ENCODE measurements at regions of chr4 and their contacts with region 1.

Region 1: GRCh38 chr4:113468165-113469022 is 293.1 kb downstream of the CAMK2D start:
- DNase-seq: peak; percentile 93
- ATAC-seq: peak; percentile 96
- H3K4me3 ChIP-seq: peak overlapping the region; percentile 46; the same call in 1 of the 2 replicates
- H3K27ac ChIP-seq: peak overlapping the region; percentile 87
- H3K4me1 ChIP-seq: peaks cover 26% of the 10 kb centered on the region
- H3K27me3 ChIP-seq: no peaks in the 10 kb centered on the region
- CTCF ChIP-seq: no peak

Region 2: GRCh38 chr4:113292371-113293042 is 175.9 kb before region 1 on chr4:
- CTCF ChIA-PET with region 1: no interaction called
- POLR2A ChIA-PET with region 1: no interaction called
- intact Hi-C with region 1: loop called (anchors 5 kb)
- DNase-seq: no peak
- ATAC-seq: no peak
- H3K4me3 ChIP-seq: no peak overlapping the region
- H3K27ac ChIP-seq: no peak overlapping the region
- H3K4me1 ChIP-seq: no peaks in the 10 kb centered on the region
- H3K27me3 ChIP-seq: no peaks in the 10 kb centered on the region
- CTCF ChIP-seq: no peak

Region 3: GRCh38 chr4:113445286-113445685 is 23.1 kb before region 1 on chr4:
- CTCF ChIA-PET with region 1: no interaction called
- POLR2A ChIA-PET with region 1: interaction called, 5 read pairs
- intact Hi-C with region 1: loop called (anchors 1 kb)
- DNase-seq: peak; percentile 82
- ATAC-seq: peak; percentile 49
- H3K4me3 ChIP-seq: peak overlapping the region; percentile 40; the same call in 1 of the 2 replicates
- H3K27ac ChIP-seq: peak overlapping the region; percentile 100
- H3K4me1 ChIP-seq: peaks cover 30% of the 10 kb centered on the region
- H3K27me3 ChIP-seq: no peaks in the 10 kb centered on the region
- CTCF ChIP-seq: no peak

Region 4: DNA sequence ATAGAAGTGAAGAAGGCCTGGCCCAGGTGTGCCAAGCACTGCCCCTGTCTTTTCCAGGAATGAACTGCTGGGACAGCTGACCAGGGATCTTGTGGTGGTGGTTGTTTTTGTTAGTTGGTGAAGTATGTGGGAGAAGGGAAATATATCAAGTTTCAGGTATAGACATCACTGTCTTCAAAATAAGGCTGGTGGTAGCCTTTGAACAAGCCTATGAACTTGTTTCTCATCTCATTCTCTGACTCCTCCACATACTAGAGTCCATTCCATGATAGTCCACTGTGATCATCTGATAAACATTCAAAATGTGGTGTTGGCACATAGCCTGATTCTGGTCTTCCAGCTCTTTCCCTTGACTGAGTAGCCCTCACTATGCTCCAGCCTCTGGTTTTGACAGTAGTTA is 10.5 kb before region 1 on chr4:
- CTCF ChIA-PET with region 1: no interaction called
- POLR2A ChIA-PET with region 1: interaction called, 16 read pairs
- intact Hi-C with region 1: no loop called
- DNase-seq: no peak
- ATAC-seq: no peak
- H3K4me3 ChIP-seq: no peak overlapping the region
- H3K27ac ChIP-seq: no peak overlapping the region
- H3K4me1 ChIP-seq: no peaks in the 10 kb centered on the region
- H3K27me3 ChIP-seq: no peaks in the 10 kb centered on the region
- CTCF ChIP-seq: no peak

Region 5: GRCh38 chr4:113499696-113500095 is 31.3 kb after region 1 on chr4:
- CTCF ChIA-PET with region 1: no interaction called
- POLR2A ChIA-PET with region 1: interaction called, 20 read pairs
- intact Hi-C with region 1: no loop called
- DNase-seq: peak; percentile 47
- ATAC-seq: peak; percentile 63
- H3K4me3 ChIP-seq: no peak overlapping the region
- H3K27ac ChIP-seq: no peak overlapping the region
- H3K4me1 ChIP-seq: peaks cover 10% of the 10 kb centered on the region; the same call in 1 of the 2 replicates
- H3K27me3 ChIP-seq: no peaks in the 10 kb centered on the region
- CTCF ChIP-seq: no peak

Region 6: DNA sequence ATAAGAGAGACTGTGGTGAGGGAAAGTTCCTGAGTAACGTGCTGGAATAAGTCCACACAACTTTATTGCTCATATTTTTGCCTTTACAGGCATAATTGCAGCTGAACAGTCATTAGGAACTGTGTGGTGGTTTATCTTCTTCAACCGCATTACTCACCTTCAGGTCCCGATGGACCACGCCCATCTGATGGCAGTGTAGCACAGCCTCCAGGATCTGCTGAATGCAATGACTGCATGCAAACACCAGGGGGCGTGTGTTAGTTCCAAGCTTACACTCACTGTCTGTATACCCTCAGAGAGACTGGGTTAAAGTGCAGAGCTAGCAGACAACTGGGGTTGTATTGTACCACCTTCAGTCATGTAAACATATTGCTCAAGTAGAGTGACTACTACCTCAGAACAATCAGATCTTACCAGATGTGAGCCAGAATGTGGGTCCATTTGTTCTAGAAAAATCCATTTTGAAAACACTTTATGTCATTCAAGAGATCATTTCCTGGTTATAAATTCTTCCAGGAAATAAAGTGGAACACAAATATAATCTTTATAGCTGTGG is 79.2 kb after region 1 on chr4:
- CTCF ChIA-PET with region 1: no interaction called
- POLR2A ChIA-PET with region 1: no interaction called
- intact Hi-C with region 1: loop called (anchors 10 kb)
- DNase-seq: peak; percentile 96
- ATAC-seq: peak; percentile 97
- H3K4me3 ChIP-seq: no peak overlapping the region
- H3K27ac ChIP-seq: peak overlapping the region; percentile 31; the same call in 1 of the 2 replicates
- H3K4me1 ChIP-seq: peaks cover 13% of the 10 kb centered on the region
- H3K27me3 ChIP-seq: no peaks in the 10 kb centered on the region
- CTCF ChIP-seq: peak; percentile 91

Region 7: GRCh38 chr4:113574636-113575103 is 106.3 kb after region 1 on chr4:
- CTCF ChIA-PET with region 1: no interaction called
- POLR2A ChIA-PET with region 1: no interaction called
- intact Hi-C with region 1: no loop called
- DNase-seq: no peak
- ATAC-seq: no peak
- H3K4me3 ChIP-seq: no peak overlapping the region
- H3K27ac ChIP-seq: no peak overlapping the region
- H3K4me1 ChIP-seq: no peaks in the 10 kb centered on the region
- H3K27me3 ChIP-seq: no peaks in the 10 kb centered on the region
- CTCF ChIP-seq: no peak

Region 8: DNA sequence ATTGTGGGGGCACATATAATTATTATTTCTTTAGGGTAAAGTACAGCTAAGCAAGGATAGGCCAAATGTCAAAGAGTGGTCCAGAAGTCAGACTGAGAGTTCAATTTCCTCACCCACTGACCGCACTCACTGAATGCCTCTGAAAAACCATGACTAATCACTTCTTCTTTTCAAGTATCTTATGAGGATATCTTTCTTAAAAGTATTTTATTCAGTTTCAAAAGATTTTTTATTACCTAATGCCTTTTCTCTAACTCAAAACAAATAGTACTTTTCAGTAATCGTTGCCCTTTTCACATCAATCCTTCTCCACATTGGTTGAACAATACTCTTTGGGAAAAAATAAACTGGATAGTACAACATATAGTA is 354.9 kb after region 1 on chr4:
- CTCF ChIA-PET with region 1: no interaction called
- POLR2A ChIA-PET with region 1: no interaction called
- intact Hi-C with region 1: no loop called
- DNase-seq: no peak
- ATAC-seq: no peak
- H3K4me3 ChIP-seq: no peak overlapping the region
- H3K27ac ChIP-seq: no peak overlapping the region
- H3K4me1 ChIP-seq: peaks cover under 1% of the 10 kb centered on the region; the same call in 1 of the 2 replicates
- H3K27me3 ChIP-seq: no peaks in the 10 kb centered on the region
- CTCF ChIP-seq: no peak

Measured in PC-3 (cell line).